Endothelial cell of umbilical vein (primary cell): ENCODE measurements at regions of chr5 and their contacts with region 1.

Region 1: DNA sequence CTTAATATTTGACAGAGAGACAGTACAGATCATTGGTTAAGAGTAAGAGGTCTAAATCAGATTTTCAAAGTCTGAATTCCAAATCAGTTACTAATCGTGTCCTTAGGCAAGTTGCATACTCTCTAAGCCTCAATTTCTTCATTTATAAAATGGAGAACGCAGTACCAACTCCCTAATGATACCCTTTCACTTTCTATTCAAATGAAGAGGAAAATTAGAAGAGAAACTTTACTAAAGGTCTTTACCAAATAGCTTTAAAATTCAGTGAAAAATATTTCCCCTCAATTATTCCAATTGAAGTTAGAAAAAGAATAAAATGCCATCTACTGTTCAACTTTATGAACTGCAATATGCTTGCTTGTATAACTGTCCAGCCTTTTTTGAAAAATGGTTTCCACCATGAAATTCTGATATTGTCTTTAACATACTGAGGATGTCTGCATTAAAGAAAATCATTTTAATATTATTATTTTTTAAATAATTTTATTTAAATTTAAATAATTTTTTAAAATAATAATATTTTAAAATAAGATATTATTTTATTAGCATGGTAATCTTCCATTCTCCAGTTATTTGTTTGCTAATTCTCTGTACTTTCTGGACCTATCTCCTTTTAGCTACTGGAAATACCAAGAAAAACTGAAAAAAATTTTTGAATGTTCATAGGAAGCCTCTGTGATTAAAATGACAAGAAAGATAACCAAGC is 36.0 kb downstream of the POC5 start:
- DNase-seq: peak; percentile 50
- H3K4me3 ChIP-seq: no peak overlapping the region
- H3K27ac ChIP-seq: peak overlapping the region; percentile 52
- H3K4me1 ChIP-seq: peaks cover 28% of the 10 kb centered on the region
- H3K27me3 ChIP-seq: no peaks in the 10 kb centered on the region
- CTCF ChIP-seq: peak; percentile 8 to 41
- POLR2A ChIP-seq: no peak

Region 2: GRCh38 chr5:75236322-75237316 is 444.7 kb before region 1 on chr5 and contains the start of gene ANKRD31:
- CTCF ChIA-PET with region 1: interaction called, 50 read pairs
- POLR2A ChIA-PET with region 1: no interaction called
- dilution Hi-C with region 1: no loop called
- intact Hi-C with region 1: loop called (anchors 2 kb)
- DNase-seq: peak; percentile 71
- H3K4me3 ChIP-seq: peak within 1 kb of the TSS; percentile 8 to 57 (median 53)
- H3K27ac ChIP-seq: no peak within 1 kb of the TSS
- H3K4me1 ChIP-seq: peaks cover 3% of the 10 kb centered on the region
- H3K27me3 ChIP-seq: no peaks in the 10 kb centered on the region
- CTCF ChIP-seq: peak; percentile 67 to 86
- POLR2A ChIP-seq: peak; percentile 38
- total RNA-seq, gene ANKRD31: not detected in 2 replicates

Region 3: GRCh38 chr5:75433814-75434506 is 247.3 kb before region 1 on chr5:
- CTCF ChIA-PET with region 1: interaction called, 6 read pairs
- POLR2A ChIA-PET with region 1: no interaction called
- dilution Hi-C with region 1: no loop called
- intact Hi-C with region 1: loop called (anchors 10 kb)
- DNase-seq: no peak
- H3K4me3 ChIP-seq: no peak overlapping the region
- H3K27ac ChIP-seq: no peak overlapping the region
- H3K4me1 ChIP-seq: no peaks in the 10 kb centered on the region
- H3K27me3 ChIP-seq: no peaks in the 10 kb centered on the region
- CTCF ChIP-seq: no peak
- POLR2A ChIP-seq: no peak

Region 4: GRCh38 chr5:75574791-75575190 is 106.5 kb before region 1 on chr5:
- CTCF ChIA-PET with region 1: interaction called, 11 read pairs
- POLR2A ChIA-PET with region 1: no interaction called
- dilution Hi-C with region 1: no loop called
- intact Hi-C with region 1: no loop called
- DNase-seq: peak; percentile 49
- H3K4me3 ChIP-seq: no peak overlapping the region
- H3K27ac ChIP-seq: no peak overlapping the region
- H3K4me1 ChIP-seq: no peaks in the 10 kb centered on the region
- H3K27me3 ChIP-seq: no peaks in the 10 kb centered on the region
- CTCF ChIP-seq: no peak
- POLR2A ChIP-seq: no peak

Region 5: DNA sequence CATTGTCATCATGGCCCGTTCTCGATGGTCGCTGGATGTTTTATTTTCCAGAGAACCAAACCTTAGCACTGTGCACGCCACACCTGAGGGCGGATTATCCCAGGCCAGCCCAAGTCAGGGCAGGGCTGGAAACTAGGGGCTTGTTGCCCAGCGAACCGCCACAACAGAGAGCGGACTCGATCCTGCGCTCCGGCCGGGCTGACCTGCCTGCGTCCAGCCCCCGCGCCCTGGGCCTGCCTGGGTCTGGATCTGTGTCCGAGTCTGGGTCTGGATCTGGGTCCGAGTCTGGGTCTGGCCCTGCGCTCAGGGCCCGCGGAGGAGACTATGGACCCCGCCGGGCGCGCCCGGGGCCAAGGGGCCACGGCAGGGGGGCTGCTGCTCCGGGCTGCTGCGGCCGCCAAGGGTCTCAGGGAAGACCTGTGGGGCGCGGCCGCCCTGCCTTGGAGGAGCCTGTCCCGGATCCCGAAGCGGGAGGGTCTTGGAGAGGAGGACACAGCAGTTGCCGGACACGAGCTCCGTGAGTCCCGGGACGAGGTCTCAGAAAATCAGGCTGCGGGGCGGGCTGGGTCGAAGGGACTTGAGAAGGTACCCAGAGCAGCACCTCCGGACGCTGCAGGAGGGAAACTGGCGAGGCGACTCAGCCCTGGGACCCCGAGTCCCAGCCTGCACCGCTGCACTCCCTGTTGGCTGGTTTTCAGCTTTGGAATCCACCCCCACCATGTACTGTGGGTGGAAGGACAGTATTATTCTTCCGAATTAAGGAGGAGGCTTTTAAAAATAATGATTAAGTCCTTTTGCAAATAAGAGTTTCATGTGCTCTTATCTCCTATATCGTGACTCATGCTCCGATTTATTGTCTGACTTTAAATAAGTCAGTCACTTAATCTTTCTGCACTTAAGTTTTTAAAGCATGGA is 69.7 kb before region 1 on chr5 and contains the start of gene ANKDD1B:
- CTCF ChIA-PET with region 1: interaction called, 10 read pairs
- POLR2A ChIA-PET with region 1: no interaction called
- dilution Hi-C with region 1: no loop called
- intact Hi-C with region 1: no loop called
- DNase-seq: peak; percentile 60
- H3K4me3 ChIP-seq: peak within 1 kb of the TSS; percentile 53 to 83 (median 70)
- H3K27ac ChIP-seq: peak within 1 kb of the TSS; percentile 13
- H3K4me1 ChIP-seq: peaks cover 11% of the 10 kb centered on the region
- H3K27me3 ChIP-seq: no peaks in the 10 kb centered on the region
- CTCF ChIP-seq: no peak
- POLR2A ChIP-seq: no peak
- total RNA-seq, gene ANKDD1B: 0.65 and 0.71 TPM in 2 replicates

Region 6: DNA sequence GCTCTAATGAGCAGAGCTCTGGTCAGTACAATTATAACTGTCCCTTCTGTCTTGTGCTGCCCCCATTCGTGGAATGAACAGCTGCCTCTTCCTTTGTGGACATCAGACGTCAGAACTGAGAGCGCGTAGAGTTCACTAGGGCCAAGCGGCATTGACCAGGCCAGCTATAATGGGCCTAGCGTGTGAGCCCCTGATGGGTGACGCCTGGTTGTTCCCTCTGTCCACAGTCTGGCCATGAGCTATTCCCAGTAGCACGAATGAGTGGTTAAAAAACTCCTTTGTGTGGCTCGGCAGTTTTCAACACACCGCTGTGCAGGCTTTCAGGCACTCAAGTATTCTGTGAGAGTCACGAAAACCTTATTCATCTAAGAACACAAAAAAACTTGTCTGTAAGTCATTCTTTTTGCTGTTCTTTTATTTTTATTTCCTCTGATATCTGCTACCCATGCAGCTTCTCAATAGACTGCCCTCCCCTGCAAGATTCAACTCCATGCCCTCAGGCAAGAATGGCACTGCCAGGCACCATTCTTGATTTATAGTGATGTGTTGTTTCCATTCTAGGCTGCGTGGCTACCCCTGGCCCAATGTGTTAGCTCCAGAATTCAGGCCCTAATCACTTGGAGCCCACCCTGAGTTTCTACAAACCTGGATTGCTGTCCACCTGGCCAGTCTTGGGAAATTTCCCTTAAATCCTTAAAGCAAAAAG is 17.5 kb before region 1 on chr5:
- CTCF ChIA-PET with region 1: interaction called, 19 read pairs
- POLR2A ChIA-PET with region 1: no interaction called
- dilution Hi-C with region 1: no loop called
- intact Hi-C with region 1: no loop called
- DNase-seq: no peak
- H3K4me3 ChIP-seq: no peak overlapping the region
- H3K27ac ChIP-seq: no peak overlapping the region
- H3K4me1 ChIP-seq: peaks cover 6% of the 10 kb centered on the region
- H3K27me3 ChIP-seq: no peaks in the 10 kb centered on the region
- CTCF ChIP-seq: no peak
- POLR2A ChIP-seq: no peak

Region 7: DNA sequence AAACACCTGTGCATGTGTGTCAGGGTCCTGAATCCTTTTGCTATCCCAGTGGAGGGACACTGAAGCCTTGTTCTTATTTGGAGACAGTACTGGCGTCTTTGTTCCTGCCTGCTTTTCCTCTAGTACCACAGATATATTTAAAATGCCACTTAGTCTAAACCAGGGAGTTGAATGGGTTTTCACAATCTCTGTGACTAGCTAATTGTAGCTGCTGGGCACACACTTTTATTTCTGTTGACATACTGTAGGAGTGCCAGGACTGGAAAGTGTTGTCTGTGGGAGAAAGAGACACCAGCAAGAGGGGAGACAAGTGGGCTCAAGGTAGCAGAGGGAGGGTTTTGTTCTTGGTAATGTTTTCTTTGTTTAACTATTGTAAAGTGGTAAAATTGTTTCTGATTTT is 227.9 kb after region 1 on chr5:
- CTCF ChIA-PET with region 1: no interaction called
- POLR2A ChIA-PET with region 1: no interaction called
- dilution Hi-C with region 1: no loop called
- intact Hi-C with region 1: no loop called
- DNase-seq: no peak
- H3K4me3 ChIP-seq: no peak overlapping the region
- H3K27ac ChIP-seq: no peak overlapping the region
- H3K4me1 ChIP-seq: no peaks in the 10 kb centered on the region
- H3K27me3 ChIP-seq: no peaks in the 10 kb centered on the region
- CTCF ChIP-seq: no peak
- POLR2A ChIP-seq: no peak